ENCODE measurements at regions of chr18 and their contacts with region 1.

Region 1: DNA sequence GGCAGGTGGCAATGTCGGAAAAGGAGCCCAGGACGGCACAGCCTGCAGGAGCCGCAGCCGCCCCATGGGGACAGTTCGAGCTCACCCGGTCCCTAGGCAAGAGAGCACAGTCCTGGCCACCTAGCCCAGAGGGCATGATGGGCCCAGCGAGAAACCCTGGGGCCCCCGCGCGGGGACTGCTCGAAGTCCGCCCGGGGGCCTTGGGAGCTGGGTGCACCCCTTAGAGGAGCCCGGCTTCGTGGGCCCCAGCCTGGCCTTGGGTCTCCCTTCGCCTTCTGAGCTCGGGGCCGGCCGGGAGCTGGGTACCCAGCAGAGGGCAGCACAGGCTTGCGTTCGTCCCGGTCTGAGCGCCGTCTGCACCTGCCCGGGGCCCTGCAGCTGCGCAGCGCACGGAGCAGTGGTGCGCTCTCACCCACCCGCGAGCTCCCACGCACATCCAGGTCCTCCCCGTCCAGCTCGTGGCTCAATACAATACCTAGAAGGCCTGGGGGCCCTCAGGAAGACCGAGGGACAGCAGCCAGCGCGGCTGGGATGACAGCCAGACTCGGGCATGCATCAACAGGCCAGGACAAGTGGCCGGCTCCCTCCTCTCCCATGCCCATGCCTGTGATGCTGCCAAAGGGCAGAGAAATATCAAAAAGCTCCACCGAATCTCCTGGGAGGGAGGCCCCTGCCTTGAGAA is 96.2 kb upstream of the ZNF532 start:
- DNase-seq: peak; percentile 40 to 71 (median 60)
- ATAC-seq: peak; percentile 89
- H3K4me3 ChIP-seq: no peak overlapping the region
- H3K4me3 Mint-ChIP-seq: peak overlapping the region in 8 of 10 donors; percentile 36 to 81 (median 66)
- H3K27ac ChIP-seq: no peak overlapping the region
- H3K27ac Mint-ChIP-seq: no peak overlapping the region
- H3K4me1 ChIP-seq: peaks cover 6 to 17% of the 10 kb centered on the region in 2 donors
- H3K4me1 Mint-ChIP-seq: peaks cover 0 to 19% (median 16%) of the 10 kb centered on the region in 7 donors
- H3K27me3 ChIP-seq: peaks cover 0 to 10% of the 10 kb centered on the region in 2 donors
- H3K27me3 Mint-ChIP-seq: peaks cover 30 to 63% (median 37%) of the 10 kb centered on the region in 5 donors

Region 2: DNA sequence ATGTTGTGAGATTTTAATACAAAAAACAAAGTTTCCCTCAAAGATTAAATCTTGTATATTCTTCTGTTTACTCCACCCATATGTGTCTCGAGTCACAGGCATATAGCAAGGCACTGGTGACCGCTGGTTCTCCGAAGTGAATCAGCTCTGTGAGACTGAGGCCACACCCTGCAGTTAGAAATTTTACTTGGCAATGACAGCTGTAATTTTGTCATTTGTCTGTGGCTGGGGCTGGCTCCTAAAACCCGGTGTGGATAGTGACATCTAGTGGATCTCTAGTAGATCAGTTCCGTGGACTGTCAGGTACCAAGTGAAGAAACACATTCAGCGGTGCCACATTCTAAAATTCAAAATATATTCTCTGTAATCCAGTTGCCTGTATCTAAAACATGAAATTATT is 446.4 kb before region 1 on chr18:
- CTCF ChIA-PET with region 1: interaction called, 3 read pairs
- POLR2A ChIA-PET with region 1: no interaction called
- intact Hi-C with region 1: loop called in 1 of 2 experiments (anchors 10 kb)
- DNase-seq: peak in 8 of 9 donors; percentile 32 to 71 (median 64)
- ATAC-seq: peak; percentile 90
- H3K4me3 ChIP-seq: no peak overlapping the region
- H3K4me3 Mint-ChIP-seq: peak overlapping the region in 9 of 10 donors; percentile 31 to 75 (median 57)
- H3K27ac ChIP-seq: no peak overlapping the region
- H3K27ac Mint-ChIP-seq: peak overlapping the region in 8 of 9 donors; percentile 7 to 75 (median 58)
- H3K4me1 ChIP-seq: peaks cover 0 to 13% of the 10 kb centered on the region in 2 donors
- H3K4me1 Mint-ChIP-seq: peaks cover 7 to 25% (median 22%) of the 10 kb centered on the region in 7 donors
- H3K27me3 ChIP-seq: no peaks in the 10 kb centered on the region
- H3K27me3 Mint-ChIP-seq: peaks cover 0 to 12% (median 0%) of the 10 kb centered on the region in 5 donors

Region 3: DNA sequence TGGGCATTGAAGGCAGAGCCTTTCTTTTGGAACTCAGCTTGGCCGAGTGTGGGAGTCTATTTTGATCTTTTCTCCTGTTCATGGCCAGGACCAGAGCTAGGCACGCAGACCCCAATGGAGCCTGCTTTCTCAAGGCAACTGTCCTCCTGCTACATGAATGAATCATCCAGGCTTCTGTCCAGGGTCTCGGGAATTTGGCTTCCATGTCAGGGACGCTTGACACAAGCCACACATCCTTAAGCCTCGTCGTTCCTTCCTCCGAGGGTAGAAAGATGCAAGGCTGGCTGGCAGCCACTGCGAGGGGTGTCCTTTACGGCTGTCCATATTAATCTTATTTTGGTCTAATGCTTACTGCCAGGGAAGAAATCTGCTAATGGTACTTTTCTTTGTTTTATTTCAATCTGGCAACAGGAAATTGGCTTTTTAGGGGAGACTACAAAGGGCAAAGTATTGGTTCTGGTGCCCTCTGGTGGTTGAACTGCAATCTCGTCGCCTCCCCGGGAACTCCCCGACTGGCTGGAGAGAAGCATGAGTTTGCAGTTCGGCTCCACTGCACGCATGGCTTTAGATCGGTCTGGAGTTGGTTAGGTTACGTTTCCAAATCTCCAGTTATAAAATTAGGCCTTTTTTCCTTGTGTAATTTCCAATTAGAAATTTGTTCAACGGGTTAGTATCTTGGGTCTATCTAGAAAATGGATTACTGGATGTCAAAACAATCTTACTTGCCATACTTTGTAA is 274.7 kb before region 1 on chr18:
- CTCF ChIA-PET with region 1: interaction called, 10 read pairs
- POLR2A ChIA-PET with region 1: no interaction called
- intact Hi-C with region 1: loop called (anchors 1 kb)
- DNase-seq: peak; percentile 37 to 72 (median 64)
- ATAC-seq: peak; percentile 93
- H3K4me3 ChIP-seq: no peak overlapping the region
- H3K4me3 Mint-ChIP-seq: peak overlapping the region in 4 of 10 donors; percentile 22 to 56 (median 28)
- H3K27ac ChIP-seq: no peak overlapping the region
- H3K27ac Mint-ChIP-seq: peak overlapping the region in 2 of 9 donors; percentile 0 to 47
- H3K4me1 ChIP-seq: no peaks in the 10 kb centered on the region
- H3K4me1 Mint-ChIP-seq: peaks cover 5 to 11% (median 7%) of the 10 kb centered on the region in 7 donors
- H3K27me3 ChIP-seq: no peaks in the 10 kb centered on the region
- H3K27me3 Mint-ChIP-seq: peaks cover 19 to 45% (median 29%) of the 10 kb centered on the region in 5 donors

Region 4: DNA sequence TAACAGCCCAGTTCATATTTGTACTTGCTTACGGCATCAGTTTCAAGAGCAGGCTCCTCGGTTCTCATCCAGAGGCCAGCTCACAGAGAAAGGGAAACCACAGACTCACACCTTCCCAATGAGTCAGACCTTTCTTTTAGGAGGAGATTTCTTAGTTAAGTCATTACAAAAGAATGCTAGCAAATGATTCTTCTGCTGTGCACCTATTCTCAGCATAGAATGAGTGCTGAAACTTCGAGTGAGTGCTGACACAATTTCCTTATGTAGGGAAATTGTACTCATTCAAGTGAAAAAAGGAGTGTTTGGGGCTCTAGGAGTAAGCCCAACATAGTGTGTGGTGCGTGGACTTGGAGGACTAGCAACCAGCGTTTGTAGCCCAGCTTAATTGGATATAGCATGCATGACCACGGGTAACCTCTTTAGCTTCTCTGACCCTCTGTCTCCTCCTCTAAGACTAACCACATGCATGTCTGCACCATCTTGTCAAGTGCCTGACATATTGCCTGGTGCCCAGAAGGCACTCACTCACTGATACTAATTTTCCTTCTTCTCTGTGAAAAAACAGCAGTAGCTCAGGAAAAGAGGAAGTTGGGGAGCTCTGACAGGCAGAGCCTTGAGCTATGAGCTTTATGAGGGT is 226.5 kb before region 1 on chr18:
- CTCF ChIA-PET with region 1: interaction called, 22 read pairs
- POLR2A ChIA-PET with region 1: no interaction called
- intact Hi-C with region 1: loop called in 1 of 2 experiments (anchors 1 kb)
- DNase-seq: peak in 1 of 9 donors; percentile 52
- ATAC-seq: peak; percentile 79
- H3K4me3 ChIP-seq: no peak overlapping the region
- H3K4me3 Mint-ChIP-seq: peak overlapping the region in 1 of 10 donors; percentile 23
- H3K27ac ChIP-seq: no peak overlapping the region
- H3K27ac Mint-ChIP-seq: peak overlapping the region in 1 of 9 donors; percentile 29
- H3K4me1 ChIP-seq: peaks cover 7 to 14% of the 10 kb centered on the region in 2 donors
- H3K4me1 Mint-ChIP-seq: peaks cover 23 to 59% (median 40%) of the 10 kb centered on the region in 7 donors
- H3K27me3 ChIP-seq: no peaks in the 10 kb centered on the region
- H3K27me3 Mint-ChIP-seq: peaks cover 0 to 41% (median 0%) of the 10 kb centered on the region in 5 donors

Region 5: GRCh38 chr18:58661423-58661822 is 107.0 kb before region 1 on chr18:
- CTCF ChIA-PET with region 1: interaction called, 9 read pairs
- POLR2A ChIA-PET with region 1: interaction called, 3 read pairs
- intact Hi-C with region 1: loop called in 1 of 2 experiments (anchors 1 kb)
- DNase-seq: no peak
- ATAC-seq: no peak
- H3K4me3 ChIP-seq: no peak overlapping the region
- H3K4me3 Mint-ChIP-seq: no peak overlapping the region
- H3K27ac ChIP-seq: no peak overlapping the region
- H3K27ac Mint-ChIP-seq: peak overlapping the region in 1 of 9 donors; percentile 22
- H3K4me1 ChIP-seq: peaks cover 31 to 33% of the 10 kb centered on the region in 2 donors
- H3K4me1 Mint-ChIP-seq: peaks cover 38 to 68% (median 62%) of the 10 kb centered on the region in 7 donors
- H3K27me3 ChIP-seq: no peaks in the 10 kb centered on the region
- H3K27me3 Mint-ChIP-seq: no peaks in the 10 kb centered on the region

Region 6: GRCh38 chr18:58754544-58755068 is 13.8 kb before region 1 on chr18:
- CTCF ChIA-PET with region 1: interaction called, 24 read pairs
- POLR2A ChIA-PET with region 1: no interaction called
- intact Hi-C with region 1: no loop called
- DNase-seq: peak in 4 of 9 donors; percentile 11 to 20 (median 19)
- ATAC-seq: peak; percentile 66
- H3K4me3 ChIP-seq: no peak overlapping the region
- H3K4me3 Mint-ChIP-seq: peak overlapping the region in 3 of 10 donors; percentile 4 to 27 (median 20)
- H3K27ac ChIP-seq: no peak overlapping the region
- H3K27ac Mint-ChIP-seq: peak overlapping the region in 8 of 9 donors; percentile 7 to 81 (median 61)
- H3K4me1 ChIP-seq: peaks cover 0 to 30% of the 10 kb centered on the region in 2 donors
- H3K4me1 Mint-ChIP-seq: peaks cover 21 to 53% (median 45%) of the 10 kb centered on the region in 7 donors
- H3K27me3 ChIP-seq: no peaks in the 10 kb centered on the region
- H3K27me3 Mint-ChIP-seq: peaks cover 0 to 5% (median 0%) of the 10 kb centered on the region in 5 donors

Region 7: GRCh38 chr18:59070181-59070912 is 301.9 kb after region 1 on chr18:
- CTCF ChIA-PET with region 1: interaction called, 43 read pairs
- POLR2A ChIA-PET with region 1: interaction called, 4 read pairs
- intact Hi-C with region 1: loop called (anchors 1 kb)
- DNase-seq: peak; percentile 35 to 75 (median 65)
- ATAC-seq: peak; percentile 85
- H3K4me3 ChIP-seq: no peak overlapping the region
- H3K4me3 Mint-ChIP-seq: no peak overlapping the region
- H3K27ac ChIP-seq: no peak overlapping the region
- H3K27ac Mint-ChIP-seq: no peak overlapping the region
- H3K4me1 ChIP-seq: no peaks in the 10 kb centered on the region
- H3K4me1 Mint-ChIP-seq: no peaks in the 10 kb centered on the region
- H3K27me3 ChIP-seq: no peaks in the 10 kb centered on the region
- H3K27me3 Mint-ChIP-seq: peaks cover 0 to 8% (median 5%) of the 10 kb centered on the region in 5 donors

Measured in naive thymus-derived CD4-positive, alpha-beta T cell (primary cell).